ENCODE measurements at regions of chr12 and their contacts with region 1.

Region 1: DNA sequence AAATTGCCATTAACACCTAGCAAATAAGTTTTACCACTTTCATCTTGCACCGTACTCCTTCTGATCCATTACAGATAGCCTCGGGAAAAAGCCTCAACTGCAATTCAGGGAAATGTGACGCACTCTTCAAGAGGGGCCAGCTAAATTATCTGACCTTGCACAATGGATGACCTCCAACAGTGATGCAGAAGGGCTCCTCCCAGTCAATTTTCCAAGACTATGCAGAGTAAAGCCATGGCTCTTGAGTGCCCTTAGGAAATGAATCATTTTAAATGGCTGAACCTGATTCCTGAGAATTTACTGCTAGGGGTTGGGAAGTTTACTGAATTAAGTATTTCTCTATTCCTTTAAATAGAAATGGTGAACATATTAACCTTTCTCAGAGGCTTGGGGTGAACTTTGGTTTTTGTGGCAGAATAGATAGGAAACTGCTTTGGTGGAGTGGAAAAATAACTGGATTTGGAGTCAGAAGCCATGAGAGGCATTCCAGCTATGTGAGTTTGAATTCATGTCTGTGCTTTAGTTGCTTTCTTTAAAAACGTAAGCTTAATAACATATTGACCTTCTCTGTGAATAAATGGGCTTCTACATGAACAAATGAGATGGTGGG is 64.8 kb upstream of the OVCH1 start:
- DNase-seq: no peak
- ATAC-seq: peak; percentile 7
- H3K4me3 ChIP-seq: no peak overlapping the region
- H3K27ac ChIP-seq: no peak overlapping the region
- H3K4me1 ChIP-seq: peaks cover 34% of the 10 kb centered on the region
- H3K27me3 ChIP-seq: peaks cover 8% of the 10 kb centered on the region
- CTCF ChIP-seq: no peak

Region 2: DNA sequence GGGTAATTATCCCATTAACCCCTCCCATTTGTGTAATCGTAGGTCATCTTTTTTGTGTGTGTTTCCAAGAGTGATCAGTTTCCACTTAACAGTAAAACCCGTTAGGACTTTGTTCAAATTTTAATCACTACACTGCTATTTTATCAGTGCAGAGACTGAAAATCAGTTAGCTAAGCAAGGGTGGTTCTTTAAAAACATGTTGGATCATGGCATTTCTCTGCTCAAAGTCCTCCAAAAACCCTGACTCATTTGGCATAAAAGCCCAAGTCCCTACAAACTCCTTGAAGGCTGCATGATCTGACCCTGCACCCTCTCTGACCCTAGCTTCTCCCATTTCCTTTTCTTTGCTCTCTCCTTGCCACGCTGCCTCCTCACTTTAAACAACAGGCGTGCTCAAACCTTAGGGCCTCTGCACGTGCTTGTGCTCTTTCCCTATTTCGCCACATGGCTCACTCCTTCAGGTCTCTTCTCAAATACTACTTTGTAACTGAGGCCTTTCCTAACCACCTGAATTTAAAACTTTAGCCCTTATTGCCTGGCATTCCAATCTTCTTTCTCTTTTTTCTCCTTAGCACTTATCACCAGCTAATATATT is 51.6 kb before region 1 on chr12:
- CTCF ChIA-PET with region 1: no interaction called
- POLR2A ChIA-PET with region 1: no interaction called
- intact Hi-C with region 1: no loop called
- DNase-seq: no peak
- ATAC-seq: no peak
- H3K4me3 ChIP-seq: no peak overlapping the region
- H3K27ac ChIP-seq: no peak overlapping the region
- H3K4me1 ChIP-seq: peaks cover 4% of the 10 kb centered on the region; the same call in 1 of the 2 replicates
- H3K27me3 ChIP-seq: peaks cover 11% of the 10 kb centered on the region
- CTCF ChIP-seq: no peak

Region 3: GRCh38 chr12:29547151-29547632 is 15.1 kb before region 1 on chr12:
- CTCF ChIA-PET with region 1: no interaction called
- POLR2A ChIA-PET with region 1: no interaction called
- intact Hi-C with region 1: loop called (anchors 1 kb)
- DNase-seq: peak; percentile 78
- ATAC-seq: peak; percentile 87
- H3K4me3 ChIP-seq: peak overlapping the region; percentile 13; the same call in 1 of the 2 replicates
- H3K27ac ChIP-seq: peak overlapping the region; percentile 4
- H3K4me1 ChIP-seq: peaks cover 19% of the 10 kb centered on the region
- H3K27me3 ChIP-seq: no peaks in the 10 kb centered on the region
- CTCF ChIP-seq: no peak

Region 4: GRCh38 chr12:29783773-29784666 is 221.7 kb after region 1 on chr12 and contains the start of gene TMTC1:
- CTCF ChIA-PET with region 1: no interaction called
- POLR2A ChIA-PET with region 1: no interaction called
- intact Hi-C with region 1: no loop called
- DNase-seq: peak; percentile 63
- ATAC-seq: peak; percentile 82
- H3K4me3 ChIP-seq: peak within 1 kb of the TSS; percentile 69
- H3K27ac ChIP-seq: no peak within 1 kb of the TSS
- H3K4me1 ChIP-seq: no peaks in the 10 kb centered on the region
- H3K27me3 ChIP-seq: peaks cover 64% of the 10 kb centered on the region
- CTCF ChIP-seq: no peak
- total RNA-seq, gene TMTC1: 5.8 TPM in 2 replicates